CD14-positive monocyte (primary cell): ENCODE measurements at regions of chr14 and their contacts with region 1.

Region 1: DNA sequence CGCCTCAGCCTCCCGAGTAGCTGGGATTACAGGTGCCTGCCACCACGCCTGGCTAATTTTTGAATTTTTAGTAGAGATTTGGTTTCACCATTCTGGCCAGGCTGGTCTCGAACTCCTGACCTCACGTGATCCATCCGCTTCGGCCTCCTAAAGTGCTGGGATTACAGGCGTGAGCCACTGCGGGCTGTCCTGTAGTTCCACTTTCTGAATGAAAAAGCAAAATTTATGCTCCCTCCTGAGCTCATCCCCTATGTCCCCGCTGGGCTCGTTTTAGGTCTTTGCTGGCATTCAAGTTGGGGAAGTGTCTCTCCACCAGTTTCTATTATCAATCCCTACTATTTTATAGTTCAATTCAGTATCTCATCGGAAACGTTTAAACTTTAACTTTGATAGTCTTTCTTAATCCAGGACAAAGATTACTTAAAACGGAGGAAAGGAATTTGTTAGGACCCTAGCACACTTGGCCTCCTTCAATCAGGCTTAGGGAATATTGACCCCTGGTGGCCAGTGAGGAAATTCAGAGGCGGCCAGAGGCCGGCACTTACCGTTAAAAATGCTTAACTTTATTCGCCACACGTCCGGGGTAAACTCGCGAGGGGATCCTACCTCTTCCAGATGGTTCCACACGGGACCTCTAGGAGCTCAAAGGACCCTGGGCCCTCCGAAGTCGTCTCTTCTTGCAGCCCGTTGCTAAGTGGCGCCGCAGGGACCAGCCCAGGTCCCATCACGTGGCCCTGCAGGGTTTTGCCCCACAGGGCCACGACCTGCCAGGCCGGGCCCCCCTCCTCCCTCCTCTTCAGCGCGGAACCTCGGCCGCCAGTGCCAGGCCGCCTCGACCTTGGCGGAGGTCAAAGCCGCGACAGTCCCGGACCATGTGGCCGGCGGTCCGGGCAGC is 11.4 kb upstream of the DNAL1 start:
- DNase-seq: peak; percentile 48 to 61 (median 59)
- H3K4me3 ChIP-seq: peak overlapping the region; percentile 47 to 77 (median 61)
- H3K4me3 Mint-ChIP-seq: peak overlapping the region; percentile 83 to 95
- H3K27ac ChIP-seq: peak overlapping the region in 1 of 2 donors; percentile 13
- H3K27ac Mint-ChIP-seq: peak overlapping the region in 6 of 7 donors; percentile 33 to 82 (median 74)
- H3K4me1 ChIP-seq: peaks cover 17% of the 10 kb centered on the region in 2 donors
- H3K4me1 Mint-ChIP-seq: peaks cover 9% of the 10 kb centered on the region
- H3K27me3 ChIP-seq: peaks cover 0 to 23% of the 10 kb centered on the region in 2 donors
- H3K27me3 Mint-ChIP-seq: peaks cover 12 to 28% (median 26%) of the 10 kb centered on the region in 3 donors
- CTCF ChIP-seq: peak; percentile 90

Region 2: DNA sequence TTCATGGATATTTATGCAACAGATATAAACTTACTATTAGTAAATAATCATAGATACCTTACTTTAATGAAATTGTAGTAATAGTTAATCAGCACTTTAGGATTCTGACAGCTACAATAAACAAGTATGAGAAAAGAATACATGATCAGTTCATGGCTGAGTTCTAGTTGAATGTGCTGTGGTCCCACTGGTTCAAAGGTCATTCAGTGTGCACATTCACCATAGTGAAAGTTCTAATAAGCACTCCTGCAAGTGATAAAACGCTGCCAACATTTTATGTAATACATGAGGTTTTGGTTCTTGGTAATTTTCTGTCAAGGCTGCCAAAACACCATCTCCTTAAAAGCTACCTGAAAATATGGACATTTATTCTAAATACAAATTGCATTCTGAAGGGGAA is 267.6 kb before region 1 on chr14:
- intact Hi-C with region 1: no loop called
- DNase-seq: no peak
- H3K4me3 ChIP-seq: no peak overlapping the region
- H3K4me3 Mint-ChIP-seq: no peak overlapping the region
- H3K27ac ChIP-seq: no peak overlapping the region
- H3K27ac Mint-ChIP-seq: no peak overlapping the region
- H3K4me1 ChIP-seq: peaks cover 3 to 16% of the 10 kb centered on the region in 2 donors
- H3K4me1 Mint-ChIP-seq: peaks cover 11% of the 10 kb centered on the region
- H3K27me3 ChIP-seq: no peaks in the 10 kb centered on the region
- H3K27me3 Mint-ChIP-seq: no peaks in the 10 kb centered on the region
- CTCF ChIP-seq: no peak

Region 3: DNA sequence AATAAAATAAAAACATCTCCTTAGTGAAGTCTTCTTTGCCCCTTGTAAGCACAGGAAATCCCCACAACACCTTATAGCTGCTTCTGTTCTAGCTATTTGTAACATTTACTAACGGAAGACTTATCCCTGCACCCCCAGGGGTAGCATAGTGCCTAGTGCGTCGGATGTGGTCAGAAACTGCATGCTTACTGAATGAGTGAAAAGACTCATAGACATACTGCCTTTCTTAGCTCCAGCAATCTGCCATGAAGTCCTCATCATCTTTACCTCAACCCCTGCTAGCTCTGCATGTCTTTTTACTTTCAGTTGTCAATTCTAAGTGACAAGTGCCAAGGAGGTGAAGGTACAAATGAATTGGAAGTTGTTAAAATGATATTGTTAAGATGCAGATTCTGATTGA is 129.7 kb before region 1 on chr14:
- intact Hi-C with region 1: loop called in 1 of 2 experiments (anchors 5 kb)
- DNase-seq: no peak
- H3K4me3 ChIP-seq: no peak overlapping the region
- H3K4me3 Mint-ChIP-seq: no peak overlapping the region
- H3K27ac ChIP-seq: no peak overlapping the region
- H3K27ac Mint-ChIP-seq: no peak overlapping the region
- H3K4me1 ChIP-seq: no peaks in the 10 kb centered on the region
- H3K4me1 Mint-ChIP-seq: peaks cover 3% of the 10 kb centered on the region
- H3K27me3 ChIP-seq: no peaks in the 10 kb centered on the region
- H3K27me3 Mint-ChIP-seq: peaks cover 0 to 1% (median 0%) of the 10 kb centered on the region in 3 donors
- CTCF ChIP-seq: no peak

Region 4: DNA sequence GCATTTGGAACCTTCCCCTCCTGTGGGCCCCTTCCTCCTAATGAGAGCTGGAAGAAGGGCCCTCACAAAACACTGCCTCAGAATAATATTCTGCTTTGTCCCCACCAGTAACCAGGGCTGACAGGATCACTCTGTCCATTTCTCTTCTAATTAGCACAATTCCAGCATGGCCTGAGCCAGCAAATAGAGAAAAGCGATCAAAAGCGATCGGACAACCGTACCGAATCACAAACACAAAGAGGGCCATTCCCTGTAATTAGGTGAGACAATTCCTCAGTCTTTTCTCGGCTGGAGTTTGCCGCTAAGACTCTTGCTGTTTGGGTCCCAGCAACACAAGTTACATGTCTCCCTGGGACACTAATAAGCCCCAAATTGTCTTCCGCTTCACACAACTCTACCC is 570.3 kb after region 1 on chr14:
- intact Hi-C with region 1: no loop called
- DNase-seq: no peak
- H3K4me3 ChIP-seq: no peak overlapping the region
- H3K4me3 Mint-ChIP-seq: no peak overlapping the region
- H3K27ac ChIP-seq: no peak overlapping the region
- H3K27ac Mint-ChIP-seq: no peak overlapping the region
- H3K4me1 ChIP-seq: peaks cover 0 to 2% of the 10 kb centered on the region in 2 donors
- H3K4me1 Mint-ChIP-seq: peaks cover 8% of the 10 kb centered on the region
- H3K27me3 ChIP-seq: no peaks in the 10 kb centered on the region
- H3K27me3 Mint-ChIP-seq: peaks cover 1 to 3% (median 3%) of the 10 kb centered on the region in 3 donors
- CTCF ChIP-seq: no peak